ENCODE measurements at regions of chr2 and their contacts with region 1.

Region 1: DNA sequence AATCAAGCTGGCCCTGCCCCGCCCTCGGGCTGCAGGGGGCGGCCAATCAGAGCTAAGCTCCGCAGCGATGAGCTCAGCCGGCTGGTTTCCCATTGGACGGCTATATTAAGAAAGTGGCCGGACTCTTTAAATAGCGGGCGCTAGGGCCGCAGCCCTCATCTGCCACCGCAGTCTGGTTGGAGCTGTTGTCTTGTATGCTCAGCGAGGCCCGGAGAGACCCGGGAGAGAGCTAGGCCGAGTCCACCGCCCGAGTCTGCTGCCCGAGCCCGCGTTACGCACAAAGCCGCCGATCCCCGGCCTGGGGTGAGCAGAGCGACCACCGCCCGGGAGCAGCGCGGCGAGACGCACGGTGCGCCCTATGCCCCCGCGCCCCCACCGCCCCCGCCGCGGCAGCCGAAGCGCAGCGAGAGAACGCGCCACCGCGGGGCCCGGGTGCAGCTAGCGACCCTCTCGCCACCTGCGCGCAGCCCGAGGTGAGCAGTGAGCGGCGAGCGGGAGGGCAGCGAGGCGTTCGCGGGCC is at the start of gene RHOB:
- DNase-seq: peak; percentile 96
- H3K4me3 Mint-ChIP-seq: peak within 1 kb of the TSS; percentile 77
- H3K27ac Mint-ChIP-seq: peak within 1 kb of the TSS; percentile 74
- H3K4me1 Mint-ChIP-seq: peaks cover 6% of the 10 kb centered on the region
- H3K27me3 Mint-ChIP-seq: peaks cover 57% of the 10 kb centered on the region
- total RNA-seq, gene RHOB: 16.4 and 18.5 TPM in 2 replicates

Region 2: DNA sequence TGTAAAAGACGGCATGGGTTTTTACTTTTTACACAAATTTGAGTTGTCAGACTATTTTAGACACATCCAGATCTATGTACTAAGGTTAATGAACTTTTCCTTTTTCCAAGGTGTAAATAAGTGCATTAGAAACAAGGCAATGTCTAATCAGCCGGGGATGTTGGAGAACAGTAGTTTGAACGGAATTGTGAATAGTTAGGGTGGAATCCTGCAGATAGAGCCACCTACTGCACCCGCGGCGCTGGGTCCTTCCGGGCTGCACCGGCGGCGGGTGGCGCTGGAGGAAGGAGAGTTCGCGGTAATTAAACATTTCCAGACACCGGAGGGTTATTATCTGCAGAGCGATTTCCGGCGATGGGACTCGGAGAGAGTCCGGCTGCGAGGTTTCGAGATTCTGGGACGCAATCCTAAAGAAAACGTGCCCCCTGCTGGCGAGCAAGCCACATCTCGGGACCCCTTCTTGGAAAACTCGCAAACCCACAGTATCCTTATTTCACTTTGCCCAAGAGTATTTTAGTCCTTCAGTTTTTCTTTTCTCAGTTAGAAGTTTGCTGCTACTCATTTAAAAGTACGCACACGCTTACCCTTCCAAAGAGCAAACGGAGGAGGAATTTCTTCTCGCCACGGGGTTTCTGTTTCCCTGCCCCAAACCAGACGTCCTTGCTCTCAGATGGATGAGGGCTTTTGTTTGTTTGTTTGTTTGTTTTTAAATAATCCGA is 1084.1 kb before region 1 on chr2:
- intact Hi-C with region 1: loop called (anchors 5 kb)
- DNase-seq: peak; percentile 80
- H3K4me3 Mint-ChIP-seq: peak overlapping the region; percentile 94
- H3K27ac Mint-ChIP-seq: peak overlapping the region; percentile 56
- H3K4me1 Mint-ChIP-seq: peaks cover 21% of the 10 kb centered on the region
- H3K27me3 Mint-ChIP-seq: peaks cover 94% of the 10 kb centered on the region

Region 3: DNA sequence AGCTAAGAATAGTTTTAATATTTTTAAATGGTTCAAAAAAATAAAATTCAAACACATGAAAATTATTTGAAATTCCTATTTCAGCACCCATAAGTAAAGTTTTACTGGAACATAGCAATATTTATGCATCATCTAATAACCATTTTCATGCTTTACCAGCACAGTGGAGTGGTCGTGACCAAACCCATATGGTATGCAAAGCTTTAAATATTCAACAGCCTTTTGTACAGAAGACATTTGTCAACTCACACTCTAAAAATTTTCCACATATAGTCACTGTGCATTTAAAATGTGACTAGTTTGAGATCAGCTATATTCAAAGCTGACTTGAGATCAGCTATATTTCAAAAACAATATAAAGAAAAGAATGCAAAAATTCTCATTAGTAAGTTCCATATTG is 142.6 kb before region 1 on chr2:
- intact Hi-C with region 1: no loop called
- DNase-seq: no peak
- H3K4me3 Mint-ChIP-seq: no peak overlapping the region
- H3K27ac Mint-ChIP-seq: no peak overlapping the region
- H3K4me1 Mint-ChIP-seq: peaks cover 13% of the 10 kb centered on the region
- H3K27me3 Mint-ChIP-seq: no peaks in the 10 kb centered on the region

Region 4: GRCh38 chr2:20430461-20431300 is 16.3 kb before region 1 on chr2:
- intact Hi-C with region 1: loop called (anchors 2 kb)
- DNase-seq: no peak
- H3K4me3 Mint-ChIP-seq: no peak overlapping the region
- H3K27ac Mint-ChIP-seq: peak overlapping the region; percentile 17
- H3K4me1 Mint-ChIP-seq: peaks cover 22% of the 10 kb centered on the region
- H3K27me3 Mint-ChIP-seq: peaks cover 13% of the 10 kb centered on the region

Region 5: GRCh38 chr2:20617892-20618467 is 171.0 kb after region 1 on chr2:
- intact Hi-C with region 1: no loop called
- DNase-seq: no peak
- H3K4me3 Mint-ChIP-seq: no peak overlapping the region
- H3K27ac Mint-ChIP-seq: no peak overlapping the region
- H3K4me1 Mint-ChIP-seq: no peaks in the 10 kb centered on the region
- H3K27me3 Mint-ChIP-seq: no peaks in the 10 kb centered on the region

Region 6: GRCh38 chr2:20650880-20651730 is 204.1 kb after region 1 on chr2 and contains the start of gene HS1BP3:
- intact Hi-C with region 1: loop called (anchors 1 kb)
- DNase-seq: peak; percentile 98
- H3K4me3 Mint-ChIP-seq: peak within 1 kb of the TSS; percentile 85
- H3K27ac Mint-ChIP-seq: peak within 1 kb of the TSS; percentile 89
- H3K4me1 Mint-ChIP-seq: peaks cover 29% of the 10 kb centered on the region
- H3K27me3 Mint-ChIP-seq: peaks cover 11% of the 10 kb centered on the region
- total RNA-seq, gene HS1BP3: 7.1 and 8.9 TPM in 2 replicates